Natural killer cell (primary cell): ENCODE measurements at regions of chr14 and their contacts with region 1.

Region 1: DNA sequence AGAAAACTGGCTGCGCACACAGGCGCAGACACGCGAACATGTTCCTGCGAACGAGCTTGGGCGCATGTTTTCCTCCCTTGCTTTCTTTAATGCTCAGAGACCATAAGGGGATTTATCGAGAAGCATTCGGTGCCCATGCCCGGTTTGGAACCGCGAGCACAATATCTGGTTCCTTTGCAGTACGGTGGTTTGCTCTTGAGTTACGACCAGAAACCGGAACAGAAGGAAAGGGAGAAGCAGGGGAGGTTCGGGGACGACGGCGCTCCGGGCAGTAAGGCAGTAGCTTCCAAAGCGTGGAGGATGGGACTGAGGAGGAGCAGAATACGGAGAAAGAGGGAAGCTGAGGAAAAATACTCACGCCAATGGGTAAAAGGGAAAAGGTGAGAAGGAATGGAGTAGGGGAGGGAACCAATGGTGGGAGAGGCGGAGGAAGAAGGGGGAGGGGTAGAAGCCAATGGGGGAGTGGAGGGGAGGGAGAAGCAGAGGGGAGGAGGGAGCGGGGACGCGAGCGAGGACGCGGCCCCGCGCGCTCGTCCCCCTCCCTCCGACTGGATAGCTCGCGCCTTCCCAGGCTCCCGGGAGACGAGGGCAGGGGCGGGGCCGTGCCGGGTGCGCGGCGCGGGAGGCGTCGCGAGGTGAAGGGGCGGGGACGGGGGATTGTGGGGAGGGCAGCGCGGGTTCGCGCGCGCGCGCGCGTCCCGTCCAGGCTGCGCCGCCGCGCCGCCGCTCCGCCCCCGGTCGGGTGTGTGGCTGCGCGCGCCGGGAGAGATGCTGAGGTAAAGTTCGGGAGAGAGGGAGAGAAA is 625 bp upstream of the ARHGAP5 start:
- DNase-seq: peak; percentile 37 to 90
- ATAC-seq: peak; percentile 57 to 76 (median 67)
- H3K4me3 ChIP-seq: peak overlapping the region; percentile 93
- H3K4me3 Mint-ChIP-seq: peak overlapping the region; percentile 98
- H3K27ac ChIP-seq: peak overlapping the region; percentile 81
- H3K27ac Mint-ChIP-seq: peak overlapping the region; percentile 81 to 92
- H3K4me1 ChIP-seq: peaks cover 9% of the 10 kb centered on the region
- H3K4me1 Mint-ChIP-seq: peaks cover 28 to 33% of the 10 kb centered on the region in 2 donors
- H3K27me3 ChIP-seq: no peaks in the 10 kb centered on the region
- H3K27me3 Mint-ChIP-seq: no peaks in the 10 kb centered on the region
- CTCF ChIP-seq: no peak

Region 2: DNA sequence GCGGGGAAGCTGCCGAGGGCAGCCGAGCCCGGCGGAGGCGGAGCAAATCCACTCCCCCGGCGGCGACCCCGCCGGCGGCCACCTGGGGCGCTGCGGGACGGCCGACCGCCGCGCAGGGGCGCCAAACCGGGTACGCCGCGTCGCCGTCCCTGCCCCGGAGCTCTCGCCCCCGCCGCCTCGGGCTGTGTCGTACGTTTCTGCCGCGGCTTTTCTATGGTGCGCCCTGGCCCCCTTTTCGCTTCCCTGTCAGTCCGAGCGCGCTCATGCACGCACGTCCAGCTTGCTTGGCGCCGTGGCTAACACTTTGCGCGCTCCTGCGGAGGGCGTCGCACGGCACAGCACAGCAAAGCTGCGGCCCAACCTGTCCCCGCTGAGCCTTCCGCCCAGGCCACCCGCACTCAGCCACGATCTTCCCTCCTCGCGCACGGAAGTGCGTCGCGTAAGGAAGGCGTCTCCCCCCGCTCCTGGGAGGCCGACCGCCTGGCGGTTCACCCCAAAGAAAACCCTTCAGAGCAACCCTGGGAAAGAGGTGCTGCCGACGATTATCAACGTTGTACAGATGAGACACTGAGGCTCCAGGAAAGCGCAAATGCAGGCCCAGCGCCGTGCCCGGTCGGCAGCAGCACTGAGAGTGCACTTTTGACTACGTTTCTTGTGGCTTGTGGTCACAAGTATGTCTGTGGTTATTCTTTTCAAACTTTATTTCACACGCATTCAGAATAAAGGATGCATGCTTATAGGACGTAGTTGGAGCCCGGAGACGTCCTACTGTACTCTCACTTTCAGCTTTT is 868.5 kb before region 1 on chr14 and contains the start of gene HECTD1:
- intact Hi-C with region 1: loop called (anchors 5 kb)
- DNase-seq: peak; percentile 86 to 95
- ATAC-seq: peak; percentile 74 to 85 (median 76)
- H3K4me3 ChIP-seq: peak within 1 kb of the TSS; percentile 90
- H3K4me3 Mint-ChIP-seq: peak within 1 kb of the TSS; percentile 94
- H3K27ac ChIP-seq: peak within 1 kb of the TSS; percentile 100
- H3K27ac Mint-ChIP-seq: peak within 1 kb of the TSS; percentile 99
- H3K4me1 ChIP-seq: peaks cover 26% of the 10 kb centered on the region
- H3K4me1 Mint-ChIP-seq: peaks cover 41 to 53% of the 10 kb centered on the region in 2 donors
- H3K27me3 ChIP-seq: no peaks in the 10 kb centered on the region
- H3K27me3 Mint-ChIP-seq: no peaks in the 10 kb centered on the region
- CTCF ChIP-seq: peak; percentile 81
- total RNA-seq, gene HECTD1: 162 to 202 (median 179) TPM

Region 3: DNA sequence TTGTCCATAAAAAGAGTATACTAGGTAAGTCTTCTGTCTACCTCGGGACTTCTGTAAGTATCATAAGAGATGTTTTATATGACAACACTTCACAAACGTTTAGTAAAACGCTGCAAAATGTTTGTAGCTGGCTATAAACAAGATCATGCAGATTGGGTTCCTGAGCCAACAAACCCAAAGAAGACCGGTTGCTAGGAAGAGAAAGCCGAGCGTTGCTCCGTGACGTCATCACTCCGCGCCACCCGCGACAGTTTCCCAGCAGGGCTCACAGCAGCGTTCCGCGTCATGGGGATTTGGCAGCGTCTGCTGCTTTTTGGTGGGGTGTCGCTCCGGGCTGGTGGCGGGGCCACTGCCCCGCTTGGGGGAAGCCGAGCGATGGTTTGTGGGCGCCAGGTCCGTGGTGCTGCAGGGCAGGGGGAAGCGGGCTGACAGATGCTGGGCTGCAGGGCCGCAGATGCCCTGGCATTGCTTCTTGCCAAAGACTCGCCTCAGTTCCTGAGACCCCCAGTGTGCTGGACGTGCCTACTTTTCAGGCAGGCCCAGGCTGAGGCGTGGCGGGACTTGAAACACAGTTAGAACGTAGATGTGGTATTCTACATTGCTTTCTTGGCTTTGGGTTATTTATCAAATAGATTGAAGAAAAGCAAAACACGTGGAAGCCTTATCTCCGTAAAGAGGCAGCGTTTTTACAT is 515.2 kb before region 1 on chr14 and contains the start of gene NUBPL:
- intact Hi-C with region 1: loop called (anchors 5 kb)
- DNase-seq: peak; percentile 98 to 99
- ATAC-seq: peak; percentile 94 to 95 (median 94)
- H3K4me3 ChIP-seq: peak within 1 kb of the TSS; percentile 90
- H3K4me3 Mint-ChIP-seq: peak within 1 kb of the TSS; percentile 96
- H3K27ac ChIP-seq: peak within 1 kb of the TSS; percentile 78
- H3K27ac Mint-ChIP-seq: peak within 1 kb of the TSS; percentile 97 to 99
- H3K4me1 ChIP-seq: no peaks in the 10 kb centered on the region
- H3K4me1 Mint-ChIP-seq: peaks cover 18 to 19% of the 10 kb centered on the region in 2 donors
- H3K27me3 ChIP-seq: no peaks in the 10 kb centered on the region
- H3K27me3 Mint-ChIP-seq: peaks cover 18 to 25% of the 10 kb centered on the region in 2 donors
- CTCF ChIP-seq: no peak
- total RNA-seq, gene NUBPL: 7.1 to 8.5 (median 7.5) TPM

Region 4: DNA sequence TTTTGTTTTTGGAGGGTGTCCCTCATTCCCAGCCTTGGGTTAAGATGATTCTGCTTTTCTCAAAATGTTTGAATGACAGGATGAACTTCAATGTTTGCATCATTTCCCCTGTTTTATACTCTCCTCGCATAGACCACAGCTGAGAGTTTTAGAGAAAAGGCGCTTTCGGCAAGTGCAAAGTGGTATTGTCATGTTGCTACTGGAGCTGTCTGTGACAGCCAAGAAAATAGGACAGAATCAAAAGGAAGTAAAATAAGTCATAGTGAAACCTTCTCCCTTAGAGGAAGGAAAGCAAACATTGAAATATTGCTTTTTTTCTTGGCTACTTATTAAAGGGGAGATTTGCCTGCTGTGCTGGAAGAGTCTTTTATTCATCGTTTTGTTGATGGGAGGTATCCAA is 32.9 kb before region 1 on chr14:
- intact Hi-C with region 1: no loop called
- DNase-seq: no peak
- ATAC-seq: no peak
- H3K4me3 ChIP-seq: no peak overlapping the region
- H3K4me3 Mint-ChIP-seq: no peak overlapping the region
- H3K27ac ChIP-seq: no peak overlapping the region
- H3K27ac Mint-ChIP-seq: no peak overlapping the region
- H3K4me1 ChIP-seq: no peaks in the 10 kb centered on the region
- H3K4me1 Mint-ChIP-seq: no peaks in the 10 kb centered on the region
- H3K27me3 ChIP-seq: no peaks in the 10 kb centered on the region
- H3K27me3 Mint-ChIP-seq: peaks cover 0 to 16% of the 10 kb centered on the region in 2 donors
- CTCF ChIP-seq: no peak

Region 5: GRCh38 chr14:32142341-32142740 is 65.9 kb after region 1 on chr14:
- intact Hi-C with region 1: loop called (anchors 5 kb)
- DNase-seq: no peak
- ATAC-seq: no peak
- H3K4me3 ChIP-seq: no peak overlapping the region
- H3K4me3 Mint-ChIP-seq: no peak overlapping the region
- H3K27ac ChIP-seq: no peak overlapping the region
- H3K27ac Mint-ChIP-seq: no peak overlapping the region
- H3K4me1 ChIP-seq: no peaks in the 10 kb centered on the region
- H3K4me1 Mint-ChIP-seq: no peaks in the 10 kb centered on the region
- H3K27me3 ChIP-seq: no peaks in the 10 kb centered on the region
- H3K27me3 Mint-ChIP-seq: no peaks in the 10 kb centered on the region
- CTCF ChIP-seq: no peak

Region 6: GRCh38 chr14:32202998-32203882 is 126.8 kb after region 1 on chr14 and contains the start of gene RNU6-8:
- intact Hi-C with region 1: loop called (anchors 1 kb)
- DNase-seq: peak; percentile 43 to 91
- ATAC-seq: peak; percentile 83 to 87 (median 87)
- H3K4me3 ChIP-seq: peak within 1 kb of the TSS; percentile 87
- H3K4me3 Mint-ChIP-seq: peak within 1 kb of the TSS; percentile 89
- H3K27ac ChIP-seq: peak within 1 kb of the TSS; percentile 97
- H3K27ac Mint-ChIP-seq: peak within 1 kb of the TSS; percentile 89 to 92
- H3K4me1 ChIP-seq: peaks cover 25% of the 10 kb centered on the region
- H3K4me1 Mint-ChIP-seq: peaks cover 36 to 41% of the 10 kb centered on the region in 2 donors
- H3K27me3 ChIP-seq: no peaks in the 10 kb centered on the region
- H3K27me3 Mint-ChIP-seq: peaks cover 19 to 20% of the 10 kb centered on the region in 2 donors
- CTCF ChIP-seq: no peak
- total RNA-seq, gene RNU6-8: not detected

Region 7: DNA sequence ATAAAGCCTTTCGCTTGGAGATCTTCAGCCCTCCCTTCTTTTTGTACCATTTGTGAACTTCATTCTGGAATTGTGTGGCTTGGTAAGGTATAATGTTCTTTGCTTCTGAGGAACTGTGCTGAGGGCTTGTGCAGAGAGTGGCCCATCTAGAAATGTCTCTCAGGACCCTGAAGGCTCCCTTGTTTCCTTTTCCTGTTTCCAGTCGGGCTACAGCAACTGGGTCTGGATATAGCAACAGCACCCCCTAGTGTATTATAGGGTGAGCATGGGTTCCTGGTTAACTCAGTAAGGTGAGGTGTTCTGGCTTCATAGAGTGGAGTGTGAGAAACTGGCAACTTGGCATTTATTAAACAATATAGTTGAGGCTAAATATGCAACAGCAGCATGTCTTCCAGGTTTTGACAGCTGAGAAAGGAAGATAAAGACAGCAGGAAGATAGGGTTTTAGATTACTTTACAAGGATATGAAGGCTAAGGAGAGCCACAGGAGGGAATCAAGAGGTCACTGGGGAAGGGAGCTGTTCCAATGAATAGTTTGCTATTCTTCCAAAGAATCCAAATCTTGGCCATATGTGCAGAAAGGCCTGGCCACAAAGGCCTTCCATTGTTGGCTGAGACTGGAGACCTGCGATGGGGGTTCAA is 175.7 kb after region 1 on chr14:
- intact Hi-C with region 1: loop called (anchors 1 kb)
- DNase-seq: peak in 1 of 2 donors; percentile 80
- ATAC-seq: peak; percentile 77 to 94 (median 82)
- H3K4me3 ChIP-seq: no peak overlapping the region
- H3K4me3 Mint-ChIP-seq: no peak overlapping the region
- H3K27ac ChIP-seq: no peak overlapping the region
- H3K27ac Mint-ChIP-seq: no peak overlapping the region
- H3K4me1 ChIP-seq: no peaks in the 10 kb centered on the region
- H3K4me1 Mint-ChIP-seq: no peaks in the 10 kb centered on the region
- H3K27me3 ChIP-seq: no peaks in the 10 kb centered on the region
- H3K27me3 Mint-ChIP-seq: no peaks in the 10 kb centered on the region
- CTCF ChIP-seq: peak; percentile 70

Region 8: DNA sequence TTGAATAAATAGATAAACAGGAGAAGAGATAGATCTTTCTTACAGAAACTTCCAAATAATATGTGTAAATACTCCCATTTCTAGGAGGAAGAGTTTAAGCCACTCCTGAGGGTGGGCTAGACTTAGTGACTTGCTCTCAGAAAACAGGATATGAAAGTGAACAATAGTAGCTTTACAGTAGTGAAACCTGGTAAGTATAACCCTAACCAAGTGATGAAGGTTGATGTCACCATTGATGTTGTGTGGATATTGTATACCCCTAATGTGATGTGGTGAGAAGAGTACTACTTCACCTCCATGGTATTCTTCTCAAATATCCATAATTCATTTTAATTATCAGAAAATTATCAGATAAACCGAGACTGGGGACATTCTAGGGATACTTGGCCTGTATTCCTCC is 273.5 kb after region 1 on chr14:
- intact Hi-C with region 1: no loop called
- DNase-seq: no peak
- ATAC-seq: no peak
- H3K4me3 ChIP-seq: no peak overlapping the region
- H3K4me3 Mint-ChIP-seq: no peak overlapping the region
- H3K27ac ChIP-seq: no peak overlapping the region
- H3K27ac Mint-ChIP-seq: no peak overlapping the region
- H3K4me1 ChIP-seq: no peaks in the 10 kb centered on the region
- H3K4me1 Mint-ChIP-seq: no peaks in the 10 kb centered on the region
- H3K27me3 ChIP-seq: no peaks in the 10 kb centered on the region
- H3K27me3 Mint-ChIP-seq: peaks cover 4 to 11% of the 10 kb centered on the region in 2 donors
- CTCF ChIP-seq: no peak

Region 9: GRCh38 chr14:32560209-32560857 is 483.9 kb after region 1 on chr14:
- intact Hi-C with region 1: loop called (anchors 10 kb)
- DNase-seq: peak in 1 of 2 donors; percentile 53
- ATAC-seq: peak in 2 of 3 donors; percentile 47 to 60
- H3K4me3 ChIP-seq: no peak overlapping the region
- H3K4me3 Mint-ChIP-seq: no peak overlapping the region
- H3K27ac ChIP-seq: no peak overlapping the region
- H3K27ac Mint-ChIP-seq: no peak overlapping the region
- H3K4me1 ChIP-seq: no peaks in the 10 kb centered on the region
- H3K4me1 Mint-ChIP-seq: peaks cover 13 to 18% of the 10 kb centered on the region in 2 donors
- H3K27me3 ChIP-seq: no peaks in the 10 kb centered on the region
- H3K27me3 Mint-ChIP-seq: peaks cover 0 to 3% of the 10 kb centered on the region in 2 donors
- CTCF ChIP-seq: peak; percentile 37